Tibial artery (tissue), 4 donors: ENCODE measurements at regions of chr11 and their contacts with region 1.

Region 1: DNA sequence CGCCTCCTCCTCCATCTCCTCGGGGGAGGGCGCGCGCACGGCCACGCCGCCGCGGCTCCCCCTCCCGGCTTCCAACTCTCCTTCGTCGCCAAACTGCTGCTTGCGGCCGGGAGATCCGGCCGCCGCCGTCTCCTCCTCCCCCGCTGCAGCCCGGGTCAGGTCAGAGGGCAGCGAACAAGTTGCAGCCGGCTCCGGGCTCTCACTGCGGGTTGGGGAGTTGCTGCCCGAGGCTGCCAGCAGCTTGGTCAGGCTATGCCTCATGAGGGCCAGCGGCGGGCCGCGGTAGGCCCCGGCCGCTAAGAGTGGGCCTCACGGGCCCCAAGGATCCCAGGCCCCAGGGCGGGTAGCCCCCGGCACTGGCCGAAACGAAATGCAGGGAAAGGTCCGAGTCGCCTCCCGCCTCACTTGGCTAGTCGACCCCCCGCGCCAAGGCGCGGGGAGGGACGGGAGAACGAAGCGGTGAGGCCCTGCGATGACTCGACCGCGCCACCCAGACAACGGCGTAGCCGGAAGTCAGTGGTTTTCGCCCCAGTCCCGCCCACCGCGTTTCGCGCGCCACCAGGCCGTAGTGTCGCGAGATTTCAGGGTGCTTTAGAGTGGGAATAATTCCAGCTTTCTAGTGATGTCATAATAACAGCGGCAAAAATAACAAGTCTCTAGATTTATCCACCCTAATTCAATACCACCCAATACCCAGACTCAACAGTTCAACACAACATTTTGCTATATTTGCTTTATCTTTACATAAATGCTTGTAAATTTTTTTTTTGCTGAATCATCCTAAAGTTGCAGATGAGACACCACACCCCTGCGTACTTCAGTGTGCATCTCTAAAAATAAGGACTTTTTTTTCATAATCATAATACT is at the start of gene CREBZF:
- DNase-seq: peak; percentile 92 to 97
- H3K4me3 ChIP-seq: peak within 1 kb of the TSS; percentile 71 to 95
- H3K27ac ChIP-seq: peak within 1 kb of the TSS; percentile 96 to 98
- H3K4me1 ChIP-seq: peaks cover 0 to 35% (median 15%) of the 10 kb centered on the region in 4 donors
- H3K27me3 ChIP-seq: no peaks in the 10 kb centered on the region
- CTCF ChIP-seq: peak in 1 of 2 experiments; percentile 13

Region 2: GRCh38 chr11:85627998-85628770 is 36.7 kb before region 1 on chr11 and contains the start of gene TMEM126B:
- intact Hi-C with region 1: loop called (anchors 5 kb)
- DNase-seq: peak; percentile 99
- H3K4me3 ChIP-seq: peak within 1 kb of the TSS; percentile 84 to 88
- H3K27ac ChIP-seq: peak within 1 kb of the TSS; percentile 93 to 95
- H3K4me1 ChIP-seq: peaks cover 0 to 39% (median 16%) of the 10 kb centered on the region in 4 donors
- H3K27me3 ChIP-seq: no peaks in the 10 kb centered on the region
- CTCF ChIP-seq: no peak